Activated CD8-positive, alpha-beta memory T cell treated with anti-CD3 and anti-CD28 coated beads, Interleukin-2, amount 10 ng/mL, durations not matched to agents 7 days and 5 days (primary cell): ENCODE measurements at regions of chr11 and their contacts with region 1.

Region 1: DNA sequence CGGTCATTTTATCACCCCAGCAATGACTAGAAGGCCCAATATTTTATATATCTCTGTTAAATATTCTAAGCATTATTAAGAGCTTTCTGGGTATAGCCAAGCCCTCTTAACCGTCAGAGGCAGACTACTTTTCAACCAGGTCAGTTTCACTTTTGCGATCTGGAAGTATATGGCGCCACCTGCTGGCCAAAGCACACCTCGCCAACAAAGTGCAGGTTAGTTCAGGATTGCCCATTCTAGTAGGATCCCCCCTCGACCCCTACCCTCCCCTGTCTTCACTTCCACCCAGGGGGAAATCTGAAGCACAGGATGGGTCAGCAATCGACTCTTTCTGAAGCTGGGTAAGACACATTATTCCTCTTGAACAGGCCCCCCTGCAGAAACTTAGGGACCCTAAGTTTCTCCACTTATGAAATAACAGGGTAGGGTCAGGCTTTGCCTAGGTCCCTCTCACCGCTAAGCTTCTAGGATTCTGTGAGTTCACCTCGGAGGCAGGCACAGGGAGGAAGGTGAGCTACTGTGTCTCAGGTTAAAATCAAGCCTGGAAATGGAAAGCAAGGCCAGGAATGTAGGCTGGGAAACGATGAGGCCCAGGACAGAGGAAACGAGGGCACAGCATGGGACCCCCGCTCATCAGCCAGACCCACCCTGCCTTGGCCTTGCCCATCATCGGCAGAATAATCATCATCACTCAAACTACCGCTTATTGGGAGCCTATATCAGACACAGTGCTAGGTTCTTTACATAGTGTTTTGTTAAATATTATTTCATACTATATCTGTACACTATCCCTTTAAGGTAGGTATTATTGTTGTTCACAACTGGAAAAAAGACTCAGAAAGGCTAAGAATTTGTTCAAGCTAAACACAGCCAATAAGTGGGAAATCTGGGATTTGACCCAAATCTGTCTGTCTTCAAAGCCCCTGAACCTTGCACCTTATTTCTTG is 35.6 kb downstream of the KCNJ1 start:
- DNase-seq: peak; percentile 92
- ATAC-seq: peak; percentile 90
- H3K4me3 Mint-ChIP-seq: peak overlapping the region; percentile 66
- H3K27ac Mint-ChIP-seq: peak overlapping the region; percentile 95
- H3K4me1 Mint-ChIP-seq: peaks cover 28% of the 10 kb centered on the region
- H3K27me3 Mint-ChIP-seq: no peaks in the 10 kb centered on the region

Region 2: GRCh38 chr11:128172046-128172878 is 659.2 kb before region 1 on chr11:
- CTCF ChIA-PET with region 1: interaction called, 82 read pairs
- DNase-seq: peak; percentile 91
- ATAC-seq: peak; percentile 93
- H3K4me3 Mint-ChIP-seq: no peak overlapping the region
- H3K27ac Mint-ChIP-seq: no peak overlapping the region
- H3K4me1 Mint-ChIP-seq: peaks cover 9% of the 10 kb centered on the region
- H3K27me3 Mint-ChIP-seq: no peaks in the 10 kb centered on the region

Region 3: GRCh38 chr11:128512474-128512996 is 318.9 kb before region 1 on chr11:
- CTCF ChIA-PET with region 1: no interaction called
- DNase-seq: peak; percentile 75
- ATAC-seq: peak; percentile 54
- H3K4me3 Mint-ChIP-seq: peak overlapping the region; percentile 99
- H3K27ac Mint-ChIP-seq: peak overlapping the region; percentile 99
- H3K4me1 Mint-ChIP-seq: peaks cover 89% of the 10 kb centered on the region
- H3K27me3 Mint-ChIP-seq: no peaks in the 10 kb centered on the region

Region 4: DNA sequence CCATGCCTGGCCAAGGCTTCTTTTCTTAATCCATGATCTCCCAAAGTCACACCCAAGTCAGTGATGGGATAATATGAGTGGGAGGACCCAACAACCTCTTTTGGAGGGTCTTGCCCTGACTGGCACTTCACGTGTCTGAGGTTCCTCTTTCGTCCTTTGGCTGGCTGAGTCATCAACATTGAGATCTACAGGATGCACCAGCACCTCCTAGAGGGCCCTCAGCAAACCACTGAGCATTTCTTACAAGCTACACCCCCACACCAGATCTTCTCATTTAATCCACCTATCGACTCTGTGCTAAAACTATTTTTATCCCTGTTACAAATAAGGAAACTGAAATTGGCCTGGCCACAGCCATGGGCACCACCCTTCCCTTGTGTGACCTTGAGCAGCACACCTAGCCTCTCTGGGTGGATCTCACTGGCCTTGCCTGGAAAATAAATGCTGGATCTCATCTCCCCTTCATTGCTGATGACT is 74.2 kb before region 1 on chr11:
- CTCF ChIA-PET with region 1: interaction called, 19 read pairs
- DNase-seq: peak; percentile 87
- ATAC-seq: peak; percentile 90
- H3K4me3 Mint-ChIP-seq: peak overlapping the region; percentile 27
- H3K27ac Mint-ChIP-seq: peak overlapping the region; percentile 92
- H3K4me1 Mint-ChIP-seq: peaks cover 63% of the 10 kb centered on the region
- H3K27me3 Mint-ChIP-seq: no peaks in the 10 kb centered on the region

Region 5: GRCh38 chr11:128784059-128784804 is 47.2 kb before region 1 on chr11:
- CTCF ChIA-PET with region 1: interaction called, 10 read pairs
- DNase-seq: no peak
- ATAC-seq: no peak
- H3K4me3 Mint-ChIP-seq: no peak overlapping the region
- H3K27ac Mint-ChIP-seq: peak overlapping the region; percentile 24
- H3K4me1 Mint-ChIP-seq: peaks cover 39% of the 10 kb centered on the region
- H3K27me3 Mint-ChIP-seq: no peaks in the 10 kb centered on the region

Region 6: DNA sequence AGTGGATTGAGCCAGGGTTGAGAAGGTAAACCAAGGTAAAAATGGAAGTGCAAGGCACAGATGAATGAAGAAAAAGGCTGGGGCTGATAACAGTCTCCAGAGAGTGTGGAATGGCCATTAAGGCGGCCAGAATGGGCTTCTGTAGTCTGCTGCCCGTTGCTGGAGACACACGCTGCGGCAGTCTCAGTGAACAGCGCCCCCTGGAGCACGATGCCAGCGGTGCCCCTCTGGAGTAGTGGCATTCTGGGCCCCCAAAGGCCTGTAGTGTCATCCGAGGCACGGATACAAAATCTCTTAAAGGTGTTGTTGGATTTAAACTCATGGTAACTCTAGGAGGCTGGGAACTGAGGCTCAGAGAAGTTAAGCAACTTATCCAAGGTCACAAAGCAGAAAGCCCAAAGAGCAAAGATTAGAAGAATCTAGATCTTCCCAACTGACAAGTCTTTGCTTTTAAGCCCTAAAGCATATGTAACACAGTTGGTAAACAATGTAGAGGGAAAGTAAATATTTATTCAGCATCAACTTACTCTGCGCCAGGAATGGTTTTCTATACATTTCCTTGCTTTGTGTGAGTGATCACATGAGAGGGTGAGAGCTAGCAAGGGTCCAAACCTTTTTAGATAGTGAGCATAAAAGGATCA is 17.5 kb after region 1 on chr11:
- CTCF ChIA-PET with region 1: interaction called, 102 read pairs
- DNase-seq: peak; percentile 77
- ATAC-seq: peak; percentile 81
- H3K4me3 Mint-ChIP-seq: no peak overlapping the region
- H3K27ac Mint-ChIP-seq: no peak overlapping the region
- H3K4me1 Mint-ChIP-seq: peaks cover 25% of the 10 kb centered on the region
- H3K27me3 Mint-ChIP-seq: no peaks in the 10 kb centered on the region